ENCODE measurements at regions of chr19 and their contacts with region 1.

Region 1: GRCh38 chr19:58182989-58183816 is at the start of gene ZNF274:
- DNase-seq: peak; percentile 88 to 95 (median 93)
- ATAC-seq: peak; percentile 92
- H3K4me3 ChIP-seq: peak within 1 kb of the TSS; percentile 87
- H3K4me3 Mint-ChIP-seq: peak within 1 kb of the TSS; percentile 91 to 99 (median 94)
- H3K27ac ChIP-seq: peak within 1 kb of the TSS; percentile 97
- H3K27ac Mint-ChIP-seq: peak within 1 kb of the TSS; percentile 98 to 100 (median 99)
- H3K4me1 ChIP-seq: peaks cover 0 to 12% of the 10 kb centered on the region in 2 donors
- H3K4me1 Mint-ChIP-seq: peaks cover 10 to 24% (median 17%) of the 10 kb centered on the region in 7 donors
- H3K27me3 ChIP-seq: no peaks in the 10 kb centered on the region
- H3K27me3 Mint-ChIP-seq: no peaks in the 10 kb centered on the region
- total RNA-seq, gene ZNF274: 20.1 to 91.1 (median 52.7) TPM

Region 2: GRCh38 chr19:57410877-57411671 is 772.1 kb before region 1 on chr19 and contains the start of gene ZNF17:
- CTCF ChIA-PET with region 1: no interaction called
- POLR2A ChIA-PET with region 1: no interaction called
- intact Hi-C with region 1: loop called in 1 of 2 experiments (anchors 1 kb)
- DNase-seq: peak; percentile 72 to 95 (median 88)
- ATAC-seq: peak; percentile 100
- H3K4me3 ChIP-seq: peak within 1 kb of the TSS; percentile 80
- H3K4me3 Mint-ChIP-seq: peak within 1 kb of the TSS; percentile 85 to 97 (median 96)
- H3K27ac ChIP-seq: peak within 1 kb of the TSS; percentile 80
- H3K27ac Mint-ChIP-seq: peak within 1 kb of the TSS; percentile 78 to 96 (median 92)
- H3K4me1 ChIP-seq: peaks cover 3 to 8% of the 10 kb centered on the region in 2 donors
- H3K4me1 Mint-ChIP-seq: peaks cover 20 to 46% (median 34%) of the 10 kb centered on the region in 7 donors
- H3K27me3 ChIP-seq: no peaks in the 10 kb centered on the region
- H3K27me3 Mint-ChIP-seq: no peaks in the 10 kb centered on the region
- total RNA-seq, gene ZNF17: 9.3 to 27.8 (median 17.2) TPM

Region 3: DNA sequence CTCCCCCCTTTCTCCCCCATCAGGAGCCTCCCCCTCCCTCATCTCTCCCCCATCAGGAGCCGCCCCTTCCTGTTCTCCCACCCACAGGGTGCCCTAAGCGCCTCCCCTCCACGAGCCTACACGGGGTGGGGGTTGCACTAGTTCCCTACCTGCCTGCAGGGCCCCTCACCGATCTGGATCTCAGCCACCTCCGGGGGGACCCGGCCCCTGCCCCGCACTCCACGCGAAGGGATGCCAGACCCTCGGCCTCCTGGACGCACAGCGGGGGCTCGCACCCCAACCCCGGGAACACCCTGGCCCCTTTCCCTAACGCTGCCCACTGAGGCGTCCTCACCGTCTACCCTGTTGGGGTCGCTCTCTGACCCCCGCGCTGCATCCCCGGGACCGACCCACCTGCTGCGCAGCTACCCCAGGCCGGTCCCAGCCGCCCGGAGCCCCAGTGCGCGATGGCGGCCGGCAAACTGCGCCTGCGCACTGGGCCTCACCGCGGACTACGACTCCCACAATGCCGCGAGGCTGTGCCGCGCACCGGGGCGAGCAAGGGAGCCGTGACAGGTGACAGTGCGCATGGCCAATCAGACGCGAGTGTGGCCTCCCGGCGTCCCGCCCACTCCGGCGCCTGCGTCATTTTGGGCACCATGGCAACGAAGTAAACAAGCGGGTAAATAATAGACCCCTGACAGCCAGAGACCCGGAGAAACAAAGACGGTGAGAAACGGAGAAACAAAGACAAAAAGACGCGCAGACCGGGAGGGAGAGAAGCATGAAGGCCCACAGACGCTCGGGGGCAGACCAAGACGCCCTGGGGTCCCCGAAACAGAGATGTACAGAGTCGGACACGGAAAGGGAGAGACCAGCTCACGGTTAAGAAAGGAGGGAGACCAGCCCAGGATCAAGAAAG is 85.2 kb before region 1 on chr19 and contains the start of gene ZSCAN18:
- CTCF ChIA-PET with region 1: no interaction called
- POLR2A ChIA-PET with region 1: interaction called, 6 read pairs
- intact Hi-C with region 1: loop called in 1 of 2 experiments (anchors 1 kb)
- DNase-seq: peak; percentile 77 to 100 (median 99)
- ATAC-seq: peak; percentile 97
- H3K4me3 ChIP-seq: peak within 1 kb of the TSS; percentile 86
- H3K4me3 Mint-ChIP-seq: peak within 1 kb of the TSS; percentile 83 to 100 (median 91)
- H3K27ac ChIP-seq: peak within 1 kb of the TSS; percentile 100
- H3K27ac Mint-ChIP-seq: peak within 1 kb of the TSS; percentile 98 to 100 (median 100)
- H3K4me1 ChIP-seq: peaks cover 0 to 11% of the 10 kb centered on the region in 2 donors
- H3K4me1 Mint-ChIP-seq: peaks cover 8 to 18% (median 15%) of the 10 kb centered on the region in 7 donors
- H3K27me3 ChIP-seq: no peaks in the 10 kb centered on the region
- H3K27me3 Mint-ChIP-seq: no peaks in the 10 kb centered on the region
- total RNA-seq, gene ZSCAN18: 8.2 to 100 (median 78.1) TPM

Region 4: GRCh38 chr19:58305065-58305931 is 122.1 kb after region 1 on chr19 and contains the start of gene ERVK3-1:
- CTCF ChIA-PET with region 1: no interaction called
- POLR2A ChIA-PET with region 1: interaction called, 5 read pairs
- intact Hi-C with region 1: loop called (anchors 1 kb)
- DNase-seq: peak; percentile 80 to 95 (median 93)
- ATAC-seq: peak; percentile 99
- H3K4me3 ChIP-seq: peak within 1 kb of the TSS; percentile 69
- H3K4me3 Mint-ChIP-seq: peak within 1 kb of the TSS; percentile 94 to 100 (median 98)
- H3K27ac ChIP-seq: peak within 1 kb of the TSS; percentile 91
- H3K27ac Mint-ChIP-seq: peak within 1 kb of the TSS; percentile 98 to 100 (median 99)
- H3K4me1 ChIP-seq: peaks cover 14 to 20% of the 10 kb centered on the region in 2 donors
- H3K4me1 Mint-ChIP-seq: peaks cover 33 to 64% (median 55%) of the 10 kb centered on the region in 7 donors
- H3K27me3 ChIP-seq: no peaks in the 10 kb centered on the region
- H3K27me3 Mint-ChIP-seq: no peaks in the 10 kb centered on the region
- total RNA-seq, gene ERVK3-1: 59.7 to 122 (median 65.4) TPM

Region 5: DNA sequence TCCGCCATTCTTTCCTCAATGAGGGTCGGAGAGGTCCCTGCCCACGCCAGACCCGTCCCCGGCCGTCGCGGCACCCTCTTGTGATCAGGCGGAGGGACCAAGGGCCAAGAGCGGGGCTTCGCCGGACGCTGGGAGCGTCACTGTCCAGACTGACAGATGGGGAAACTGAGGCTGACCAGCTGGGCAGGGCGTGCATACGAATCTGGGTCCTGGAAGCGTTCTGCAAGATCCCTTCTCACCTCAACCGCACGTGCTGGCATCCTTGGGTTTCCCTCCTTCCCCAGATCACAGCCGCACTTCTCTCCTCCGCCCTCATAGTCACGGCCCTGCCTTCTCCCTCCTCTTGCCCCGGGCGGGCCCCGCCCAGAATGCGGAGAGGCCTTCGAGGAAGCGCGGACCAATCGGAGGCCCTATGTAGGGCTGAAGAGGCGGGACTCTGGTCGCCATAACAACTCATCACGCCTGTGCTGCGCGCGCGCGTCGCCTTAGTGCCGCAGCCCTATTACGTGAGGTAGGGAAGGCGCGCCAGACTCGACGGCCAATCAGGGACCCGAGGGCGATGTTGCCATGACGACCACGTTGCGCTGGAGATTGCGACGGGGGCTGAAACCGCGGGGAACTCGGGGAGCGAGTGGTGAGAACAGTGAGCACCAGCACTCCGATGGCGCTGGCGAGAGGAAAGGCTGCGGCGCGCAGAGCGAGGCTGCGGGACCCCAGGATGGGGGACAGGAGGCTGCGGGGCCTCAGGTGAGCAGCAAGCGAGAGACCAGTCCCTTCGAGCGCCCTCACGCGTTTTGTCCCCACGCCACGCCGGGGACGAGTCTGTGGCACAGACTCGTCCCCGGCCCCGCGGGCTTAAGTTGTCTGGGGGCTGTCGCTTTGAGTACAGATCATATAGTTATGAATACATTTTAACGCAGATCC is 218.0 kb after region 1 on chr19:
- CTCF ChIA-PET with region 1: no interaction called
- POLR2A ChIA-PET with region 1: interaction called, 3 read pairs
- intact Hi-C with region 1: loop called in 1 of 2 experiments (anchors 1 kb)
- DNase-seq: peak; percentile 96 to 100 (median 98)
- ATAC-seq: peak; percentile 97
- H3K4me3 ChIP-seq: peak overlapping the region; percentile 77
- H3K4me3 Mint-ChIP-seq: peak overlapping the region; percentile 86 to 98 (median 94)
- H3K27ac ChIP-seq: peak overlapping the region; percentile 91
- H3K27ac Mint-ChIP-seq: peak overlapping the region; percentile 88 to 97 (median 94)
- H3K4me1 ChIP-seq: peaks cover 6 to 13% of the 10 kb centered on the region in 2 donors
- H3K4me1 Mint-ChIP-seq: peaks cover 6 to 19% (median 8%) of the 10 kb centered on the region in 7 donors
- H3K27me3 ChIP-seq: peaks cover 0 to 3% of the 10 kb centered on the region in 2 donors
- H3K27me3 Mint-ChIP-seq: peaks cover 5 to 20% (median 7%) of the 10 kb centered on the region in 5 donors

Region 6: GRCh38 chr19:58475714-58476497 is 292.7 kb after region 1 on chr19 and contains the start of gene ZNF446:
- CTCF ChIA-PET with region 1: no interaction called
- POLR2A ChIA-PET with region 1: no interaction called
- intact Hi-C with region 1: loop called in 1 of 2 experiments (anchors 2 kb)
- DNase-seq: peak; percentile 84 to 97 (median 96)
- ATAC-seq: peak; percentile 92
- H3K4me3 ChIP-seq: peak within 1 kb of the TSS; percentile 77
- H3K4me3 Mint-ChIP-seq: peak within 1 kb of the TSS; percentile 78 to 99 (median 96)
- H3K27ac ChIP-seq: peak within 1 kb of the TSS; percentile 91
- H3K27ac Mint-ChIP-seq: peak within 1 kb of the TSS; percentile 87 to 100 (median 99)
- H3K4me1 ChIP-seq: peaks cover 14 to 16% of the 10 kb centered on the region in 2 donors
- H3K4me1 Mint-ChIP-seq: peaks cover 6 to 29% (median 17%) of the 10 kb centered on the region in 7 donors
- H3K27me3 ChIP-seq: no peaks in the 10 kb centered on the region
- H3K27me3 Mint-ChIP-seq: no peaks in the 10 kb centered on the region
- total RNA-seq, gene ZNF446: 9.5 to 20.0 (median 15.1) TPM

Measured in naive thymus-derived CD4-positive, alpha-beta T cell (primary cell).